B cell (primary cell): ENCODE measurements at regions of chr5 and their contacts with region 1.

Region 1: DNA sequence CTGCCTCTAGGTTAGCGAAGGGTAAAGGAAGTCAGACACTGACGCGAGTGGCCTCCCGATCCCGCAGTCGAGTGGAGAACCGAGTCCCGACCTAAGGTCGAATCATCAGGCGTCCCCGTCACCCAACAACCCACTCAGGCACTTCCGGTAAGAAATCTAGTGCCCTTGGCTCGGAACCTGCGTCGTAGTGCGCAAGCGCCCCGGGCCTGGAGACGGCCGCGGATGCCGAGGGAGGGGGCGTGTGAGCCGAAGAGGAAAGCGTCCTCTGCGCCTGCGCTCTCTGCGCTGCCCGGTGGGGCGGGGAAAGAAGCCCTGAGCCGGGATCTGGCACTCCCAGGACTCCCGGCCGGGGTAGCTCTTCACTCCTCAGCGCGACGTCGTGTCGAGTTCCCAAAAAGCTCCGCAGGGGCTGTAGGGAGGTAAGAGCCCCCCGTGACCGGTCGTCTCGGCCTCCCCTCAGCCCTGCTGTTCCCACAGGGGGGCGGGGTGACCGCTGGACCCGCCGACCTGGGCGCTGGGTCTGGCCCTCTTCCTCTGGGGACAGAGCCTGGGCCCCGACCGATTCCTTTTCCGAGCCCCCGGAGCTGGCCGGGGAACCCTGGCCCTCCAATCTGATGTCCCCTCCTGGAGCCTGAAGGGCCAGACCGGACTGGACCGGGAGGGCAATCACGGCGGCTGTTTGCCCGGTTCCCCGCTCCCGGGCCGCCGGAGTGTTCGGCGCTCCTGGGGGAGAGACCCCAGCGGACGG is at the start of gene ZFYVE16:
- DNase-seq: peak; percentile 98
- ATAC-seq: peak; percentile 84
- H3K4me3 ChIP-seq: peak within 1 kb of the TSS; percentile 87 to 99 (median 92)
- H3K4me3 Mint-ChIP-seq: peak within 1 kb of the TSS; percentile 97
- H3K27ac ChIP-seq: peak within 1 kb of the TSS; percentile 84 to 95
- H3K27ac Mint-ChIP-seq: peak within 1 kb of the TSS; percentile 99
- H3K4me1 ChIP-seq: peaks cover 13 to 17% of the 10 kb centered on the region in 2 donors
- H3K4me1 Mint-ChIP-seq: peaks cover 20% of the 10 kb centered on the region
- H3K27me3 ChIP-seq: no peaks in the 10 kb centered on the region
- H3K27me3 Mint-ChIP-seq: no peaks in the 10 kb centered on the region
- CTCF ChIP-seq: peak; percentile 18
- total RNA-seq, gene ZFYVE16: 38.3 and 44.4 TPM in 2 replicates

Region 2: DNA sequence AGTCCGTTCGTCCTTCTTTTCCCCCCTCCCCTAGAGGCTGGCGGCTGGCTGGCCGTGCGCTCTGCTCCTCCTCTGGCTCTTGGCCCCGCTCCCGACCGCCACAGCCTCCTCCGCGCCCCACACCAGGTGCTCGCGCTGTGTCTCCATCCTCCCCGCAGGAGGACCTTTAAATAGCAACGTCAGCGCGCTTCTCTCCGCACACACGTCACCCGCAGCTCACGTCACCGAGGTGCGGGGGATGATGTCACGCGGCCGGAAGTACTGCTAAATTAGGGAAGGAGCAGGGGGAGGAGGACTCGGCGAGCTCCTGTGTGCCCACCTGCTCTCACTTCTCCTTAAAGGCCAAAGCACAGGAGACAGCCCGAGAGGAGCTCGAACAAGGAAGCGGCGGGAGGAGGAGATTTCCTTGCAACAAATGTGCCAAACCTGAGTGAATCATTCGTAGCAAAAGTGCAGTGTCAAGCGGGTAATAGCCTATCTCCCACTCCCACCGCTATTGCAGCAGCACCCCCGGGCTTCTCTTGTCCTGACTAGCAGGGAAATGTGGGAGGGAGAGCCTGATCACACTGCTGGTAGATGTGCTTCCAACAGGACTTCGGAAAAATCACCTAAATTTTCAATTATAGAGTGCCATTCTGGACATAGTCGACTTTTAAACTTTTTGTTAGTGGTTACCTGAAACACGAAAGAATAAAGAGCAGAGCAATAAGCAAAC is 893.4 kb before region 1 on chr5:
- CTCF ChIA-PET with region 1: no interaction called
- POLR2A ChIA-PET with region 1: no interaction called
- intact Hi-C with region 1: loop called (anchors 5 kb)
- DNase-seq: peak; percentile 98
- ATAC-seq: peak; percentile 79
- H3K4me3 ChIP-seq: peak overlapping the region; percentile 32 to 85 (median 76)
- H3K4me3 Mint-ChIP-seq: peak overlapping the region; percentile 100
- H3K27ac ChIP-seq: peak overlapping the region; percentile 89 to 94
- H3K27ac Mint-ChIP-seq: peak overlapping the region; percentile 100
- H3K4me1 ChIP-seq: peaks cover 26 to 29% of the 10 kb centered on the region in 2 donors
- H3K4me1 Mint-ChIP-seq: peaks cover 36% of the 10 kb centered on the region
- H3K27me3 ChIP-seq: peaks cover 5 to 31% (median 28%) of the 10 kb centered on the region in 4 experiments
- H3K27me3 Mint-ChIP-seq: peaks cover 29% of the 10 kb centered on the region
- CTCF ChIP-seq: no peak

Region 3: GRCh38 chr5:80255732-80256479 is 152.0 kb before region 1 on chr5 and contains the start of gene SERINC5:
- CTCF ChIA-PET with region 1: no interaction called
- POLR2A ChIA-PET with region 1: interaction called, 8 read pairs
- intact Hi-C with region 1: loop called (anchors 1 kb)
- DNase-seq: peak; percentile 87
- ATAC-seq: peak; percentile 87
- H3K4me3 ChIP-seq: peak within 1 kb of the TSS; percentile 80 to 93 (median 89)
- H3K4me3 Mint-ChIP-seq: peak within 1 kb of the TSS; percentile 100
- H3K27ac ChIP-seq: peak within 1 kb of the TSS; percentile 78 to 79
- H3K27ac Mint-ChIP-seq: peak within 1 kb of the TSS; percentile 98
- H3K4me1 ChIP-seq: peaks cover 9 to 24% of the 10 kb centered on the region in 2 donors
- H3K4me1 Mint-ChIP-seq: peaks cover 28% of the 10 kb centered on the region
- H3K27me3 ChIP-seq: no peaks in the 10 kb centered on the region
- H3K27me3 Mint-ChIP-seq: no peaks in the 10 kb centered on the region
- CTCF ChIP-seq: no peak
- total RNA-seq, gene SERINC5: 9.5 and 11.4 TPM in 2 replicates

Region 4: GRCh38 chr5:80654391-80655230 is 246.7 kb after region 1 on chr5 and contains the starts of genes DHFR and MSH3:
- CTCF ChIA-PET with region 1: no interaction called
- POLR2A ChIA-PET with region 1: no interaction called
- intact Hi-C with region 1: loop called (anchors 1 kb)
- DNase-seq: peak; percentile 94
- ATAC-seq: peak; percentile 73
- H3K4me3 ChIP-seq: peak within 1 kb of the TSS; percentile 59 to 90 (median 74)
- H3K4me3 Mint-ChIP-seq: peak within 1 kb of the TSS; percentile 93
- H3K27ac ChIP-seq: peak within 1 kb of the TSS; percentile 68 to 71
- H3K27ac Mint-ChIP-seq: peak within 1 kb of the TSS; percentile 95
- H3K4me1 ChIP-seq: peaks cover 17 to 21% of the 10 kb centered on the region in 2 donors
- H3K4me1 Mint-ChIP-seq: peaks cover 23% of the 10 kb centered on the region
- H3K27me3 ChIP-seq: no peaks in the 10 kb centered on the region
- H3K27me3 Mint-ChIP-seq: no peaks in the 10 kb centered on the region
- CTCF ChIP-seq: peak; percentile 28
- total RNA-seq, gene DHFR: 12.0 and 12.6 TPM in 2 replicates
- total RNA-seq, gene MSH3: 24.5 and 26.3 TPM in 2 replicates

Region 5: GRCh38 chr5:80711938-80712337 is 304.0 kb after region 1 on chr5:
- CTCF ChIA-PET with region 1: no interaction called
- POLR2A ChIA-PET with region 1: no interaction called
- intact Hi-C with region 1: no loop called
- DNase-seq: no peak
- ATAC-seq: no peak
- H3K4me3 ChIP-seq: no peak overlapping the region
- H3K4me3 Mint-ChIP-seq: no peak overlapping the region
- H3K27ac ChIP-seq: no peak overlapping the region
- H3K27ac Mint-ChIP-seq: no peak overlapping the region
- H3K4me1 ChIP-seq: no peaks in the 10 kb centered on the region
- H3K4me1 Mint-ChIP-seq: no peaks in the 10 kb centered on the region
- H3K27me3 ChIP-seq: no peaks in the 10 kb centered on the region
- H3K27me3 Mint-ChIP-seq: no peaks in the 10 kb centered on the region
- CTCF ChIP-seq: no peak